Lower leg skin (tissue), 4 donors: ENCODE measurements at regions of chr3 and their contacts with region 1.

Region 1: GRCh38 chr3:150913133-150913922 is 8.1 kb upstream of the MINDY4B start:
- DNase-seq: no peak
- H3K4me3 ChIP-seq: no peak overlapping the region
- CTCF ChIP-seq: no peak
- POLR2A ChIP-seq: no peak

Region 2: GRCh38 chr3:150798122-150798626 is 115.2 kb before region 1 on chr3:
- intact Hi-C with region 1: no loop called
- DNase-seq: no peak
- H3K4me3 ChIP-seq: no peak overlapping the region
- CTCF ChIP-seq: no peak
- POLR2A ChIP-seq: no peak

Region 3: DNA sequence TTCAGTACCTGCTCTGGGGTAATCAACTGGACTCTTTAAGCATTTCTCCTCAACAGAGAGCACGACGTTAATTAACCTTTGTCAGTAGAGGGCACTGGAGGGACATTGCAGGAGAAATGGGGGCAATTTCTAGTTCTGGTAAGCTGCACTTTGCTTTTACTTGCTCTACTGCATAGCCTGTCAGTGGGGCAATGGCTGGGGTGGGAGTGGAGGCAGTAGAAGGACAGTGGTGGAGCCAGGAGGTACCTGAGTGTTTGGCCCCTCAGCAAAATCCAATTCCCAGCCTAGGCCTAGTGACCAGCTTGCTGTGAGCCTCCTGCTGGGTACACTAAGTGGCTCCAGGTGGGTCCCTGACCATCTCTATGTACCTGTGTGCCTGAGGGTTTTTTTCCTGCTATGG is 153.8 kb after region 1 on chr3:
- intact Hi-C with region 1: no loop called
- DNase-seq: no peak
- H3K4me3 ChIP-seq: no peak overlapping the region
- CTCF ChIP-seq: no peak
- POLR2A ChIP-seq: no peak

Region 4: GRCh38 chr3:151816091-151816604 is 902.8 kb after region 1 on chr3:
- intact Hi-C with region 1: loop called (anchors 5 kb)
- DNase-seq: peak; percentile 40 to 75
- H3K4me3 ChIP-seq: no peak overlapping the region
- CTCF ChIP-seq: no peak
- POLR2A ChIP-seq: no peak